GM12878 (cell line): ENCODE measurements at regions of chr9 and their contacts with region 1.

Region 1: GRCh38 chr9:93236527-93237206 is 52.7 kb downstream of the WNK2 start:
- DNase-seq: no peak
- ATAC-seq: no peak
- H3K4me3 ChIP-seq: no peak overlapping the region
- H3K27ac ChIP-seq: no peak overlapping the region
- H3K4me1 ChIP-seq: no peaks in the 10 kb centered on the region
- H3K27me3 ChIP-seq: peaks cover 0 to 3% of the 10 kb centered on the region in 2 experiments; a peak in 3 of 4 replicates
- CTCF ChIP-seq: no peak
- EP300 ChIP-seq: no peak
- POLR2A ChIP-seq: no peak
- RAD21 ChIP-seq: no peak

Region 2: DNA sequence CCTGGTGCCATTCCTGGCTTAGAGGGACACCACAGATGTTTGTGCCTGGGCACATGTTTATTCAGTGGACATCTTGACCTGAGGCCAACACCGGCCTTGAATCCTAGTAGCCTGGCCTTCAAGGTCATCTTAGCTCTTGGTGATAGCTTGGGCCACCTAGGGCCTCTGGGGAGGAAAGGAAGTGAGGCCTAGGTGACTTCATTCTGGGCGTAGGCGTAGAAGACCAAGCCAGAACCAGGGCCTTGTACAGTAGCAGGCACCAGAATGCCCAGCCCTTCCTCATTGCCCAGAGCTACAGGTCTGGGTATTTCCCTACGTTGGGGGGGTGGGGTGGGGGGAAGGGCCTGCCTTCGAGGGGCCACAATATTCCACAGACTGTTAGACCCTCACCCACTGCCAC is 19.0 kb before region 1 on chr9:
- CTCF ChIA-PET with region 1: no interaction called
- POLR2A ChIA-PET with region 1: no interaction called
- RAD21 ChIA-PET with region 1: no interaction called
- SMC1A ChIA-PET with region 1: no interaction called
- in situ Hi-C with region 1: no loop called
- intact Hi-C with region 1: no loop called
- DNase-seq: no peak
- ATAC-seq: no peak; the same call in 2 of the 3 replicates
- H3K4me3 ChIP-seq: no peak overlapping the region
- H3K27ac ChIP-seq: no peak overlapping the region
- H3K4me1 ChIP-seq: no peaks in the 10 kb centered on the region
- H3K27me3 ChIP-seq: no peaks in the 10 kb centered on the region
- CTCF ChIP-seq: no peak
- EP300 ChIP-seq: no peak
- POLR2A ChIP-seq: no peak
- RAD21 ChIP-seq: no peak

Region 3: GRCh38 chr9:93444301-93444700 is 207.6 kb after region 1 on chr9:
- CTCF ChIA-PET with region 1: no interaction called
- POLR2A ChIA-PET with region 1: interaction called, 12 read pairs
- RAD21 ChIA-PET with region 1: no interaction called
- SMC1A ChIA-PET with region 1: no interaction called
- in situ Hi-C with region 1: no loop called
- intact Hi-C with region 1: no loop called
- DNase-seq: no peak
- ATAC-seq: no peak
- H3K4me3 ChIP-seq: no peak overlapping the region
- H3K27ac ChIP-seq: no peak overlapping the region
- H3K4me1 ChIP-seq: 0 out of 2 replicates have a peak, but pooled peaks cover under 1% of the 10 kb centered on the region
- H3K27me3 ChIP-seq: no peaks in the 10 kb centered on the region
- CTCF ChIP-seq: no peak
- EP300 ChIP-seq: no peak
- POLR2A ChIP-seq: no peak
- RAD21 ChIP-seq: no peak